Activated naive CD4-positive, alpha-beta T cell treated with anti-CD3 and anti-CD28 coated beads for 36 hours (primary cell): ENCODE measurements at regions of chr1 and their contacts with region 1.

Region 1: DNA sequence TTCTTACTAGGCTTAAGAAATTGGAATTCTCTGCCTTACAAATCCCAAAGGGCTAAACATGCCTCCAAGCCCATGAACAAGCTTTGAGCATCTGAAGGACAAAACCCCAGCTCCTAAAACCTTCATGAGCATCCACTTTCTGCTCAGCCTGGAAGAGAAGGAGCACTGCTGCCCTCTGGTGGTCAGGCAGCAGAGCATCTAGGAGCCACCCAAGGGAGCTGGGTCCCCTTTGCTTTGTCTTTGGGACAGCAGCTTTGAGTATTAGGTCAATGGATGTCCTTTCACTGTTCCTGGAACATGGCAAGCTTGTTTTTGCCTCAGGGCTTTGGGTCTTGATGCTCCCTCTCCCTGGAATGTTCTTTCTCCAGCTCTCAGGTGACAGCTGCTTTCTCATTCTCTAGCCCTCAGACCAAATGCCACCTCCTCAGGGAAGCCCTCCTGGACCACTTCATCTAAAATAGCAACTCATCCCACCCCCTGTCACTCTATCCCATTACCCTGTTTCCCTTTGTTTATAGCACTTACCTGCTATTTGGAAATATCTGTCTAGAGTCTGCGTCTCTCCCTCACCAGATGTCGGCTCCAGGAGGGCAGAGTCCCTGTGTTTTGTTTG is 25.7 kb downstream of the RAB7B start:
- DNase-seq: peak; percentile 88
- H3K4me3 Mint-ChIP-seq: no peak overlapping the region
- H3K27ac Mint-ChIP-seq: no peak overlapping the region
- H3K4me1 Mint-ChIP-seq: no peaks in the 10 kb centered on the region
- H3K27me3 Mint-ChIP-seq: no peaks in the 10 kb centered on the region

Region 2: DNA sequence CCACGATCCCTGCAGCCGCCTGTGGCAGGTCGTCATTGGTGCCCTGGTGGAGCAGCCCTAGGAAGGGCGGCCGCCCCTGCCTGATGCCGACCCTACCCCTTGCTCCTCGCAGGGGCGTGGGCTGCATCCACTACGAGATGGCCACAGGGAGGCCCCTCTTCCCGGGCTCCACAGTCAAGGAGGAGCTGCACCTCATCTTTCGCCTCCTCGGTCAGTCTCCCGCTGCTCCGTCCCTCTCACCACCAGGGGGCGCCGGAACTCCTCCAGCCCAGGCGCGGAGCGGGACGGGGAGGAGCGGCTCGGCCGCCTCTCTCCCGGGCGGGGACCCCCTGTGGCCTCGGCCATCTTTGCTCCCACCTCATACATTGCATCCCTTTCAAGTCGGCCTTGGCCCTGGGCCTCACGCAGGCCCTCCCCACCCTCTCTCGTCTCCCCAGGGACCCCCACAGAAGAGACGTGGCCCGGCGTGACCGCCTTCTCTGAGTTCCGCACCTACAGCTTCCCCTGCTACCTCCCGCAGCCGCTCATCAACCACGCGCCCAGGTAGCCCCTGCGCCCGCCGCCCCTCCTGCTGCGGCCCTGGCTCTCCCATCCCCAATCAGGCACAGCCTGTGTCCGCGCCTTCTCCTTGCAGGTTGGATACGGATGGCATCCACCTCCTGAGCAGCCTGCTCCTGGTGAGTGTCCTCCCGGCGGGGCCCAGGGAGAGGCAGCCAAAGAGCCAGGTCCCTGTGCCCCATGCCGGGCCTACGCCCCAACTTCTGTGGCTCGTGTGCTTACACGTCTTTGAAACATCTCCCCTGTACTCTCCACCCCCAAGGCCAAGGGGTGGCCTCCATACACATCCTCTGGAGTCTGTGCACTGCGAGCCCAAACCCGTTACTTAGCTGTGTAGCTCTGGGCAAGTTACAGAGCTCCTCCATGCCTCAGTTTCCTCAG is 448.4 kb before region 1 on chr1:
- CTCF ChIA-PET with region 1: interaction called, 4 read pairs
- intact Hi-C with region 1: loop called (anchors 10 kb)
- DNase-seq: peak; percentile 87
- H3K4me3 Mint-ChIP-seq: peak overlapping the region; percentile 36
- H3K27ac Mint-ChIP-seq: no peak overlapping the region
- H3K4me1 Mint-ChIP-seq: no peaks in the 10 kb centered on the region
- H3K27me3 Mint-ChIP-seq: no peaks in the 10 kb centered on the region

Region 3: GRCh38 chr1:205783904-205784303 is 193.6 kb before region 1 on chr1:
- CTCF ChIA-PET with region 1: interaction called, 12 read pairs
- intact Hi-C with region 1: no loop called
- DNase-seq: no peak
- H3K4me3 Mint-ChIP-seq: no peak overlapping the region
- H3K27ac Mint-ChIP-seq: no peak overlapping the region
- H3K4me1 Mint-ChIP-seq: peaks cover 9% of the 10 kb centered on the region
- H3K27me3 Mint-ChIP-seq: no peaks in the 10 kb centered on the region

Region 4: GRCh38 chr1:205913451-205914155 is 63.9 kb before region 1 on chr1:
- CTCF ChIA-PET with region 1: interaction called, 172 read pairs
- intact Hi-C with region 1: no loop called
- DNase-seq: no peak
- H3K4me3 Mint-ChIP-seq: no peak overlapping the region
- H3K27ac Mint-ChIP-seq: no peak overlapping the region
- H3K4me1 Mint-ChIP-seq: no peaks in the 10 kb centered on the region
- H3K27me3 Mint-ChIP-seq: no peaks in the 10 kb centered on the region

Region 5: DNA sequence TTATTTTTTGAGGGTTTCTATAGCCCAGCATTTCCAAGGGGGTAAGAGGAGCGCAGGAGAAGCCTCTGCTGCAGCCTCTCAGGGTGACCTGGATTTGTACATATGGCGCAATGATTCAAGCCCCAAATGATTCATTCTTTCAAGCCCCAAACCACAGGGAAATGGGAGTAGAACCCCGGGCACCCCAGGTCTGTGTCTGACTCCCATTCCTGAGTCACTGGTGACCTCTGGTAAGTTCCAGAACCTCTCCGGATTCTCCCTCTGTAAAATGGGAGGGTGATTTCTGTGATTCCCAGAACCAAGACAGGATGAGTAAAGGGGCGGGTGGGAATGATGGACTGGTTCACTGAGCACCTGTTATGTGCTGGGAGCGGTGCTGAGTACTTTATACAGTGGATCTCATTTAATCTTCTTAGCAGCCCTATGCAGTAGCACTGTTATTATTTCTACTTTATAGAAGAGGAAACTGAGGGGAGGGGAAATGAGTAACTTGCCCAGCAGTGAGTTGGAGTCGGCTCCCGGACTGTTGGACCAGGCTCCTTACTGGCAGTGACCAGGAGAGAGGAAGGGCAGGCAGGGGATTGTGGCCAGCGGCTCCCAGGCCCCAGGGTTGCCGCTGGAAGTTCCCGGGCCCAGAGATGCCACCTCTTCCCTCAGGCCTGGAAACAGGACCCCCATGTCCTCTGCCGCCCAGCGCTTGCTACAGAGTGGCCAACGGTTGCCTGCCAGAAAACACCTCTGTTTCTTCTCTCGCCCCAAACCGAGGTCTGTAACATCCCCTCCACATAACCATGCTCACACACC is 14.0 kb before region 1 on chr1:
- CTCF ChIA-PET with region 1: interaction called, 12 read pairs
- intact Hi-C with region 1: no loop called
- DNase-seq: no peak
- H3K4me3 Mint-ChIP-seq: no peak overlapping the region
- H3K27ac Mint-ChIP-seq: no peak overlapping the region
- H3K4me1 Mint-ChIP-seq: peaks cover 10% of the 10 kb centered on the region
- H3K27me3 Mint-ChIP-seq: peaks cover 10% of the 10 kb centered on the region

Region 6: GRCh38 chr1:206112600-206113319 is 135.3 kb after region 1 on chr1:
- CTCF ChIA-PET with region 1: interaction called, 18 read pairs
- intact Hi-C with region 1: no loop called
- DNase-seq: no peak
- H3K4me3 Mint-ChIP-seq: no peak overlapping the region
- H3K27ac Mint-ChIP-seq: no peak overlapping the region
- H3K4me1 Mint-ChIP-seq: peaks cover 9% of the 10 kb centered on the region
- H3K27me3 Mint-ChIP-seq: peaks cover 18% of the 10 kb centered on the region